ENCODE measurements at regions of chr11 and their contacts with region 1.

Region 1: DNA sequence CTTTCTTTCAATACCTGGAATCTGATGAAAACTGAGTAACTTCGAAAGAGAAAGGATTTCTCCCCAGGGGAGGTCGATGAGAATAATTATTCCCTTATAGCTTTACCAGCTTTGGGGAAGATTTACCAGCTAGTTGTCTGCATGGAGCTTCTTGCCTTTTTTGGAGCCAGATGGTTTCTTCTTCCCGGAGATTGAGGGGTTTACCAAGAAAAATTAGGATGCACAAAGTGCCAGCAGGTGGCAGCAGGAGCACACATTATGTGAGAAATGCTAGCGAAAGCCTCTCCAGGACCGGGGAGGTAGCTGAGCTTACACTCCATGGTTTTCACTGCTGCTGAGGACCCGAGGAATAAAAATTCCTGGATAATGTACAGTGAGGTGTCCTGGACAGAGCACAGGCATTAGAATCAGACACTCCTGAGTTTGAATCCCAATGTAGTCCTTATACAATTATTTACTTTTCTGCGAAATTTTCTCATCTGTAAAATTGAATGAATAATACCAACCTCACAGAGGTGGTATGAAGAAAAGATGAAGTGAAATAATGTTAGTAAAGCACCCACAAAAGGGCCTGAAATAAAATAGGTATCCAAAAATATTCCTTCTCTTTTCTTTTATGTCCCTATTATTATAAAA is 46.0 kb upstream of the PARVA start:
- DNase-seq: peak; percentile 78
- ATAC-seq: no peak
- H3K4me3 Mint-ChIP-seq: no peak overlapping the region
- H3K27ac Mint-ChIP-seq: no peak overlapping the region
- H3K4me1 Mint-ChIP-seq: peaks cover 4% of the 10 kb centered on the region
- H3K27me3 Mint-ChIP-seq: no peaks in the 10 kb centered on the region

Region 2: DNA sequence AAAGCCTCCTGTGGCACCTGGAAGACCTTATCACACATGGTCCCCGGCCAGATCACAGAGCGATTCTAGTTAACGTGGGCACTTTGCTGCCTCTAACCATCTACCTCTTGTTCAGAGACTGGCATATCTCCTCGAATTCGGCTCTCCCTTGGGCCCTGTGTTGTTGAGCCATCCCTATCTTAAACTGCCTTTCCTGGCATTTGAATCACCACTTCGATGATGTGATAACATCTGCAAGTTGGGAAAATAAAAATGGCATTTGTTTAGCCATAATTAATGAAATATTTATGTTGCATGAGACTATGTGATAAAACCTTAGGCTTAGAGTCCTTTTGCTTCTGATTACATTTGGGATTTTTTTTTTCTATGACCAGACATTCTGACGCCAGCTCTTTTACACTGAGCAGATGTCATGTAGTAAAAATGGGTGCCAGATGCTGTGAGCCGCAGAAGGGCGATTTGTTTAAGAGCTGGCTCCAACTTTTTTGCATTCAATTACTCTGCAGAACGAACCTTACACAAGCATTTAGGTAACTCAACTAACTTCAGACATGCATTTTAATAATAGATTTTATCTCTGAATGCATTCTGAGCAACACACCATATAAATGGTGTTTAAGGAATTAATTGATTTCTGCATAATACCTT is 12.4 kb before region 1 on chr11:
- CTCF ChIA-PET with region 1: interaction called, 16 read pairs
- DNase-seq: no peak
- ATAC-seq: no peak
- H3K4me3 Mint-ChIP-seq: no peak overlapping the region
- H3K27ac Mint-ChIP-seq: no peak overlapping the region
- H3K4me1 Mint-ChIP-seq: peaks cover 7% of the 10 kb centered on the region
- H3K27me3 Mint-ChIP-seq: no peaks in the 10 kb centered on the region

Region 3: DNA sequence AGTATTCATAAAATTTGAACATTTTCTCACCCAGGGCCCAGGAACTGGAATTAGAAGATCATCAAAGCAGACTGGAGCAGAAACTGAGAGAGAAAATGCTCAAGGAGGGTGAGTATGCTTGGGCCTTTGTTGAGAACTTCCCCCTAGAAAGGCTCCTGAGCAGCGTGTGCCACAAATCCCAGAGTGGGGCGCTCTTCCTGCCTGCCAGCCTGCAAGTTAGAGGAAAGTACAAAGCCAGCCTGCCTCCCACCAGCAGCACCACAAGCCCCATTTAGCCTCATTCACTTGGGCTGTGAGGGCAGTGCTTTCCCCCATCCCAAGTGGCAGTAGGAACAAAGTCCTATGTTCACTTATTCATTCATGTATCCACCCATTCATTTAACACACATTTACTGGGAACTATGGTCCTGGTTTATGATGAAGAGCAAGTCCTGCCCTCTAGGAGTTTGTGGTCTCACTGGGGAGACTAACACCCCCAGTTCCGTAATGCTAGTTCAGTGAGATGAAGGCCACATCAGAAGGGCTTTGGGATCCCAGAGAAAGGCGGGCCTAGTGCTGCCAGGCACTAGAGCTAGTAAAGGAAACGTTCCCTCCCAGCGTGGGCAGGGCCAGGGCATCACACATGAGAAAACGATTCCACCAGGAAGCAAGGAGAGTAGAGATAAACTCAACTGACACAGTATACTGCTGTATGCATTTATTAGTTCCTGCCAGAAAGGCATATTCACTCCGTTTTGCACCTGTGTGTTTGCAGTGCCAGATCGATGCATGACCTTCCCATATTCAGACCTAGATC is 23.6 kb after region 1 on chr11:
- CTCF ChIA-PET with region 1: interaction called, 11 read pairs
- DNase-seq: no peak
- ATAC-seq: no peak
- H3K4me3 Mint-ChIP-seq: no peak overlapping the region
- H3K27ac Mint-ChIP-seq: no peak overlapping the region
- H3K4me1 Mint-ChIP-seq: peaks cover 19% of the 10 kb centered on the region
- H3K27me3 Mint-ChIP-seq: no peaks in the 10 kb centered on the region

Region 4: GRCh38 chr11:12888525-12889158 is 557.3 kb after region 1 on chr11:
- CTCF ChIA-PET with region 1: interaction called, 50 read pairs
- DNase-seq: peak; percentile 75
- ATAC-seq: peak; percentile 75
- H3K4me3 Mint-ChIP-seq: no peak overlapping the region
- H3K27ac Mint-ChIP-seq: no peak overlapping the region
- H3K4me1 Mint-ChIP-seq: no peaks in the 10 kb centered on the region
- H3K27me3 Mint-ChIP-seq: peaks cover 16% of the 10 kb centered on the region

Measured in activated CD8-positive, alpha-beta memory T cell treated with anti-CD3 and anti-CD28 coated beads, Interleukin-2, amount 10 ng/mL, durations not matched to agents 7 days and 5 days (primary cell).